ENCODE measurements at regions of chr3 and their contacts with region 1.

Region 1: DNA sequence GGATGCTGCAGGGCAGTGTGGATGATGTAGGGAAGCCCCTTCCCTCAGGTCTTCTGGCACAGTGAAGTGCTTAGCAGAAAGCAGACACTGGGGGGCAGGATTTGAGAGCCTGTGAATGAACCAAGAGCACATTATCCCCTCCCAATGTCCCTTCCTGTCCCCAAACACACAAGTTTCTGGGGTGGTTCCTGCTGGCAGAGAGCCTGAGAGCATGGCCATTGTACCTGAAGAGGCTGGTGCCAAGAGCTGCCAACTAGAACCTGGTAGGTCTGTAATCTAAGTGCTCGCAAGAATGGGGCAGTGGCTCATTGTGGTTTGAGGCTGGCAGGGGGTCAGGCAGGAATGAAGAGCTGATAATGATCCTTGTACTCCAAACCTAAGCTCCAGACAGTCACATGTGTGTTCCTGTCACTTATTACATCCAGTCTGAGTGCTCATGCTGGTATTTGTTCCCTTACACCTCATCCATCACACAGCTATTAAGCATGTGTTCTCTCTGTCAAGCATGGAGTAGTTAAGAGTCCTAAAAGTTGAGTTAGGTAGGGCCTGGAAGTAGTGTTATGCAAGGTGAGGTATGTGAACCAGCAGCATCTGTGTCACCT is 6.7 kb upstream of the CCR1 start:
- DNase-seq: no peak
- H3K4me3 ChIP-seq: no peak overlapping the region
- H3K27ac ChIP-seq: no peak overlapping the region
- H3K4me1 ChIP-seq: peaks cover 2% of the 10 kb centered on the region
- H3K27me3 ChIP-seq: no peaks in the 10 kb centered on the region
- CTCF ChIP-seq: peak; percentile 37 to 57

Region 2: GRCh38 chr3:45647148-45647619 is 567.7 kb before region 1 on chr3:
- CTCF ChIA-PET with region 1: no interaction called
- dilution Hi-C with region 1: no loop called
- in situ Hi-C with region 1: no loop called
- intact Hi-C with region 1: no loop called
- DNase-seq: peak; percentile 84
- H3K4me3 ChIP-seq: no peak overlapping the region
- H3K27ac ChIP-seq: peak overlapping the region; percentile 97
- H3K4me1 ChIP-seq: peaks cover 48% of the 10 kb centered on the region
- H3K27me3 ChIP-seq: no peaks in the 10 kb centered on the region
- CTCF ChIP-seq: no peak

Region 3: GRCh38 chr3:46245146-46245545 is 30.3 kb after region 1 on chr3:
- CTCF ChIA-PET with region 1: no interaction called
- dilution Hi-C with region 1: loop called (anchors 5 kb)
- in situ Hi-C with region 1: no loop called
- intact Hi-C with region 1: no loop called
- DNase-seq: no peak
- H3K4me3 ChIP-seq: no peak overlapping the region
- H3K27ac ChIP-seq: no peak overlapping the region
- H3K4me1 ChIP-seq: no peaks in the 10 kb centered on the region
- H3K27me3 ChIP-seq: no peaks in the 10 kb centered on the region
- CTCF ChIP-seq: no peak

Region 4: DNA sequence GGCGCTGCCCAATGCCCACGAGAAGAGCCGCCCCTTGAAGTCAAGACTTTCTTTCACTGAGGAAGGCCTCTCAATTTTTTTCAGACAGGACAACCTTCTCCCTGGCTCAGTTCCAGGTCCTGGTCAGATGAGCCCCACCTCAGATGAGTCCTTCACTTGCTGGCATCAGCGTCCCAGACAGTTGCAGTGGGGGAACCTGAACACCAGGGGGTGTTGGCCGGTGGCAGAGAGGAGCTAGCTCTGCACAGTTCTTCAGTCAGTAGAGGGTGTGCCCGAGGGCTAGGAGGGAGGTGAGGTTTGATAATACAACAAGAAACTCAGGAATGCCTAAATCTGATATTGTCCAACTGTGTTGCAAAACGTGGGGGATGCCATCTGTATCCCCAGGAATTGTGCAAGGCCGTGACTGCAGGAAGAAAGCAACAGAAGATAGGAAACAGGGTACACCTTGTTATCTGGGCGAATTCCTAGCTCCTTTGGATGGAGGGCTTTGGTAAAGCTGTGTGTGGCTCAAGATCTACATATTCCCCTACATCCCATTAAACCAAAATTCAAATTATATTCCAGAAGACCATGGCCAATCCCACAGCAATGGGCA is 61.7 kb after region 1 on chr3:
- CTCF ChIA-PET with region 1: no interaction called
- dilution Hi-C with region 1: no loop called
- in situ Hi-C with region 1: no loop called
- intact Hi-C with region 1: no loop called
- DNase-seq: peak; percentile 54
- H3K4me3 ChIP-seq: no peak overlapping the region
- H3K27ac ChIP-seq: no peak overlapping the region
- H3K4me1 ChIP-seq: no peaks in the 10 kb centered on the region
- H3K27me3 ChIP-seq: peaks cover 3% of the 10 kb centered on the region
- CTCF ChIP-seq: peak; percentile 66 to 78

Region 5: DNA sequence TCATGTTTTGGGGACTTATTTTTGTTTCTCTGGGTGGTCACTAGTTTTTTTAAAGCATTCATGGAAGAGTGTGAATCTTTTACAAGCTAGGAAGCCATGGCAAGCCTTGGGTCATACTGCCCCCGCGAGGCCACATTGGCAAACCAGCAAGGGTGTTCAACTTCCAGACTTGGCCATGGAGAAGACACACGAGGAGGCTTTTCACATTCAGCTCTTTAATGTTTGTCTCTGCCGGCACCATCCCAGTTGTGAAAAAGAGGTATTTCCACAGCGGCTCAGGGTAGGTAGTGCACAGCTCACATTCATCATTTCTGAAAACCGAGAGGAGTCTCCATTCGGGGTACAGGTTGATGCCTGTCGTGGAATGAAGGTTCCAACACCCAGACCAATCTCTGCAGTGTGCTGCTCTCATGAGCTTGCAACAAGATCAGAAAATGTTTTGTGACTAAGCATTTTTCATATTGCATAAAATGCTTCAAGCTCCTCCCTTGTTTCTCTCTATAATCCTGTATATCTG is 163.6 kb after region 1 on chr3:
- CTCF ChIA-PET with region 1: no interaction called
- dilution Hi-C with region 1: no loop called
- in situ Hi-C with region 1: loop called in 1 of 2 experiments (anchors 10 kb)
- intact Hi-C with region 1: no loop called
- DNase-seq: peak; percentile 61
- H3K4me3 ChIP-seq: no peak overlapping the region
- H3K27ac ChIP-seq: no peak overlapping the region
- H3K4me1 ChIP-seq: peaks cover 16% of the 10 kb centered on the region
- H3K27me3 ChIP-seq: no peaks in the 10 kb centered on the region
- CTCF ChIP-seq: peak; percentile 76 to 81